MCF 10A (cell line): ENCODE measurements at regions of chr7 and their contacts with region 1.

Region 1: GRCh38 chr7:54260941-54261371 is 281.2 kb upstream of the VSTM2A start:
- DNase-seq: peak; percentile 82
- H3K4me3 Mint-ChIP-seq: no peak overlapping the region
- H3K27ac Mint-ChIP-seq: peak overlapping the region; percentile 93
- H3K4me1 Mint-ChIP-seq: peaks cover 13% of the 10 kb centered on the region
- H3K27me3 Mint-ChIP-seq: no peaks in the 10 kb centered on the region
- CTCF ChIP-seq: no peak

Region 2: DNA sequence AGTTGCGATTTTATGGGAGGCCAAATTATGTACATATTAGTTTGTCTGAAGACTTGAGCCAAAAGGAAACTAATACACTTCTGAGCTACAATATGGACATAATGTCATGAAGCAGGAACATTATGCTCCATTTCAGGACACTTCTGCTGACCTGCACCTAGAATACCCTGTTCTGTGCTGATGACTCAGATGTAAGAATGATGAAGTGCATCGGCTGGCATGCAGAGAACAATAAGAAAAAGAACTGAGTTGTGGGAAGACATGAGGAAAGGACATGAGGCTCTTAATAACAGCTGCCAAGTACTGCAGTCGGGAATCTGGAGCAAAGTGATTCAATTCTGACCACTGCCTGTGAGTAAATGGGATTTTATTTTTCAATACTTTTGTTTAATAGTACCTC is 88.3 kb after region 1 on chr7:
- CTCF ChIA-PET with region 1: no interaction called
- POLR2A ChIA-PET with region 1: no interaction called
- intact Hi-C with region 1: loop called (anchors 5 kb)
- DNase-seq: peak; percentile 83
- H3K4me3 Mint-ChIP-seq: no peak overlapping the region
- H3K27ac Mint-ChIP-seq: no peak overlapping the region
- H3K4me1 Mint-ChIP-seq: peaks cover 17% of the 10 kb centered on the region
- H3K27me3 Mint-ChIP-seq: no peaks in the 10 kb centered on the region
- CTCF ChIP-seq: no peak

Region 3: GRCh38 chr7:54429106-54429505 is 168.2 kb after region 1 on chr7:
- CTCF ChIA-PET with region 1: no interaction called
- POLR2A ChIA-PET with region 1: no interaction called
- intact Hi-C with region 1: no loop called
- DNase-seq: no peak
- H3K4me3 Mint-ChIP-seq: no peak overlapping the region
- H3K27ac Mint-ChIP-seq: no peak overlapping the region
- H3K4me1 Mint-ChIP-seq: no peaks in the 10 kb centered on the region
- H3K27me3 Mint-ChIP-seq: no peaks in the 10 kb centered on the region
- CTCF ChIP-seq: no peak